Astrocyte of the cerebellum (primary cell): ENCODE measurements at regions of chr2 and their contacts with region 1.

Region 1: GRCh38 chr2:102172745-102173144 is 14.1 kb upstream of the IL1RL2 start:
- DNase-seq: no peak
- H3K4me3 ChIP-seq: no peak overlapping the region
- CTCF ChIP-seq: no peak

Region 2: GRCh38 chr2:102082571-102083392 is 90.0 kb before region 1 on chr2:
- in situ Hi-C with region 1: no loop called
- DNase-seq: peak; percentile 77
- H3K4me3 ChIP-seq: no peak overlapping the region
- CTCF ChIP-seq: no peak

Region 3: DNA sequence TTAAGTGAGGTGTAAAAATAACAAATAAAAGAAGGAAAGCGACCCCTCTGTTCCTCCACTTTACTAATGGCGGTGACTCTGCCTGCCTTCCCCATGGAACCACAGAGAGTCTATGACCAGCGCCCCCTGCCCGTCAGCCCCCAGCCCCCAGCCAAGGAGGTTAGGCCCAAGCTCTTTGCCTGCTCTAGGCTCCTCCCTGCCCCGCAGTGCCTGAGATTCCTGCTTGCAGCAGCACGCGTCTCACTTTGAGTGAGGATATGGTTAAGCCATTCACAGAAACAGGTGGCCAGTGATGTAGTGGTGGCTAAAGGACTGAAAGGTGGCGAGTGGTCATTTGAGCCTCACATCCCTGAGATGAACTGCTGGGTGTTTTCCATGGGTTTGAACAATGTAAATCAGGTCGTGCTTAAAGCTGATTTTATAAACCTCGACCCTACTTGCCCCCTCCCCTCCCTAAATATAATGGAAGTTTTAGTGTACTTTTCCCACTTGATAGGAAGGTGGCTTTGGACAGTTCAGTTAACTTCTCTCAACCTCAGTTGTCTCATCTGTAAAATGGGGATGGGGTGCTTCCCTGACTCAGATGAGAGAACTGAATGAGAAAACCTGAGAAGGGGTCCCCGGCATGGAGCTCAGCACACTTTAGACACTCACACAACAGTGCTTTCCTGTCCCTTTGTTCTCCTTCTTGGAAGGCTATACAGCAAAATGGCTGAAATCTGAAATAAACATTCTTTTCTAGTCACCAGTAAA is 60.6 kb after region 1 on chr2:
- in situ Hi-C with region 1: loop called (anchors 5 kb)
- DNase-seq: no peak
- H3K4me3 ChIP-seq: no peak overlapping the region
- CTCF ChIP-seq: no peak